Calu3 (cell line): ENCODE measurements at regions of chr2 and their contacts with region 1.

Region 1: GRCh38 chr2:224357098-224357901 is 44.6 kb downstream of the FAM124B start:
- DNase-seq: peak; percentile 72
- H3K4me3 Mint-ChIP-seq: no peak overlapping the region
- H3K27ac Mint-ChIP-seq: no peak overlapping the region
- H3K4me1 Mint-ChIP-seq: no peaks in the 10 kb centered on the region
- H3K27me3 Mint-ChIP-seq: peaks cover 26% of the 10 kb centered on the region
- CTCF ChIP-seq: peak; percentile 49

Region 2: DNA sequence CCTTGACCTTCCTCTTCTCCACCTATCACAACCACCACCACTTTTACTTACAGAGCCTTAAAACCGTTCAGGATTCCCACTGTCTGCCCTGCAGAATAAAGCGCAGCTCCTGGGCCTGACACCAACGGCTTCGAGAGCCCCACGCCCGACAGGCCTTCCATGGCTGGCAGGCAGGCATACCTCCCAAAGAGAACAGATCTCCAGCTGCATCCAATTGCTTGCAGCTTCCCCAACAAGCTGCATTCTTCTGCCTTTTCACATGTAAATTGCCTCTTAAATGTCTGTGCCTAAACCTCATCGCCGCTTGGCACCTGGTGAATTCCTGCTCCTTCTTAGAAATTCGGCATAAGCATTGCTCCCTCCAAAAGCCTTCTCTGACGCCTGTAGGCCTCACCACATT is 76.1 kb after region 1 on chr2:
- CTCF ChIA-PET with region 1: no interaction called
- intact Hi-C with region 1: no loop called
- DNase-seq: no peak
- H3K4me3 Mint-ChIP-seq: no peak overlapping the region
- H3K27ac Mint-ChIP-seq: no peak overlapping the region
- H3K4me1 Mint-ChIP-seq: no peaks in the 10 kb centered on the region
- H3K27me3 Mint-ChIP-seq: no peaks in the 10 kb centered on the region
- CTCF ChIP-seq: no peak

Region 3: GRCh38 chr2:224449212-224450147 is 92.2 kb after region 1 on chr2:
- CTCF ChIA-PET with region 1: no interaction called
- intact Hi-C with region 1: loop called (anchors 1 kb)
- DNase-seq: peak; percentile 28
- H3K4me3 Mint-ChIP-seq: no peak overlapping the region
- H3K27ac Mint-ChIP-seq: no peak overlapping the region
- H3K4me1 Mint-ChIP-seq: no peaks in the 10 kb centered on the region
- H3K27me3 Mint-ChIP-seq: no peaks in the 10 kb centered on the region
- CTCF ChIP-seq: peak; percentile 62

Region 4: DNA sequence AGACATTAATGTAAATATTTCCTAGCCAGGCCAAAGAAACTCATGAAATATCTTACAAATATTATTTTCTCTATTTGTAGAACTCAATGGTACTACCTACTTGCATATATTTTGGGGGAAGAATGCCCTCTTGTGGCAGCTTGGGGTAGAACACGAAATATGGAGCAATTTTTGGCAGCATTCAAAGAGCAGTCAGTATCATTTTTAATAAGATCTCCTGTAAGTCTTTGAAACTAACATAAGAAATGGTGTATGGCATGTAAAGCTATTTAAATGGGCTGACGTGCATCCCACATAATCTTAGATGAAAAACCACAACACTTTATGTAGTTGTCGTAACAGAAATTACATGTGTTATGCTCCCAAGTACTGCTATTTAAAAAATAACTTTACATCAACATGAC is 421.2 kb after region 1 on chr2:
- CTCF ChIA-PET with region 1: no interaction called
- intact Hi-C with region 1: loop called (anchors 1 kb)
- DNase-seq: peak; percentile 67
- H3K4me3 Mint-ChIP-seq: no peak overlapping the region
- H3K27ac Mint-ChIP-seq: no peak overlapping the region
- H3K4me1 Mint-ChIP-seq: peaks cover 23% of the 10 kb centered on the region
- H3K27me3 Mint-ChIP-seq: no peaks in the 10 kb centered on the region
- CTCF ChIP-seq: peak; percentile 48

Region 5: GRCh38 chr2:225041851-225042799 is 684.8 kb after region 1 on chr2 and contains the start of gene DOCK10:
- CTCF ChIA-PET with region 1: no interaction called
- intact Hi-C with region 1: no loop called
- DNase-seq: peak; percentile 32
- H3K4me3 Mint-ChIP-seq: peak within 1 kb of the TSS; percentile 79
- H3K27ac Mint-ChIP-seq: no peak within 1 kb of the TSS
- H3K4me1 Mint-ChIP-seq: peaks cover 17% of the 10 kb centered on the region
- H3K27me3 Mint-ChIP-seq: peaks cover 18% of the 10 kb centered on the region
- CTCF ChIP-seq: no peak
- total RNA-seq, gene DOCK10: 7.2 and 11.9 TPM in 2 replicates